Gastrocnemius medialis (tissue), 4 donors: ENCODE measurements at regions of chr1 and their contacts with region 1.

Region 1: DNA sequence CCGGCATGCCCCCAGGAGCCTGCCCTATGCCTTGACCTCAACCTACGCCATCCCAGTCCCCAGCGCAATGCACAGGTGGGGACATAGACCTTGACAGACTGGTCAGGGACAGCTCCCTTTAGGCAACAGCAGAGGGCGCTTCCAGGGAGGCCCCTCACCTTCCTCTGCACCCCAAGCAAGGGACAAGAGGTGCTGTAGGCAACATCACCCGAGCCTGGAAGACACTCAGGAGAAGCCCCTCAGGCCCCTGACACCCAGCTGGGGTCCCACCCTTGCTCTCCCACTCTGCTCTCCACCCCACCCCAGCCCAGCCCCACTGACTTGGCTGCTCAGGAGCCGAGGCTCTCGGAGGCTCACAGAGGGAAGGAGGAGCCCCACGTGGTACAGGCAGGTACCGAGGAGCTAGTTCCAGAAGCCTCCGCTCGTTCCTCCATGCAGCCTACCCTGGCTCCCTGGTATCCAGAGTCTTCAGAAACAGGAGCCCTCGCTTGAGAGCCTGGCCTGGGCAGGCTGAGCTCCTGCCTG is 2.4 kb upstream of the WNT3A start:
- DNase-seq: peak in 1 of 2 donors; percentile 4
- ATAC-seq: no peak
- H3K4me3 ChIP-seq: no peak overlapping the region
- H3K27ac ChIP-seq: no peak overlapping the region
- H3K4me1 ChIP-seq: no peaks in the 10 kb centered on the region
- H3K27me3 ChIP-seq: peaks cover 53 to 55% (median 53%) of the 10 kb centered on the region in 3 donors
- CTCF ChIP-seq: peak in 1 of 5 experiments; percentile 13
- POLR2A ChIP-seq: no peak

Region 2: GRCh38 chr1:227855687-227856086 is 148.7 kb before region 1 on chr1:
- in situ Hi-C with region 1: no loop called
- intact Hi-C with region 1: no loop called
- DNase-seq: no peak
- ATAC-seq: no peak
- H3K4me3 ChIP-seq: no peak overlapping the region
- H3K27ac ChIP-seq: no peak overlapping the region
- H3K4me1 ChIP-seq: no peaks in the 10 kb centered on the region
- H3K27me3 ChIP-seq: no peaks in the 10 kb centered on the region
- CTCF ChIP-seq: no peak
- POLR2A ChIP-seq: no peak

Region 3: GRCh38 chr1:228073857-228074545 is 69.6 kb after region 1 on chr1:
- in situ Hi-C with region 1: no loop called
- intact Hi-C with region 1: loop called (anchors 10 kb)
- DNase-seq: no peak
- ATAC-seq: no peak
- H3K4me3 ChIP-seq: no peak overlapping the region
- H3K27ac ChIP-seq: no peak overlapping the region
- H3K4me1 ChIP-seq: no peaks in the 10 kb centered on the region
- H3K27me3 ChIP-seq: peaks cover 0 to 27% (median 9%) of the 10 kb centered on the region in 3 donors
- CTCF ChIP-seq: no peak
- POLR2A ChIP-seq: no peak